Activated naive CD8-positive, alpha-beta T cell treated with anti-CD3 and anti-CD28 coated beads, Interleukin-2, amount 10 ng/mL, durations not matched to agents 7 days and 5 days (primary cell): ENCODE measurements at regions of chr15 and their contacts with region 1.

Region 1: DNA sequence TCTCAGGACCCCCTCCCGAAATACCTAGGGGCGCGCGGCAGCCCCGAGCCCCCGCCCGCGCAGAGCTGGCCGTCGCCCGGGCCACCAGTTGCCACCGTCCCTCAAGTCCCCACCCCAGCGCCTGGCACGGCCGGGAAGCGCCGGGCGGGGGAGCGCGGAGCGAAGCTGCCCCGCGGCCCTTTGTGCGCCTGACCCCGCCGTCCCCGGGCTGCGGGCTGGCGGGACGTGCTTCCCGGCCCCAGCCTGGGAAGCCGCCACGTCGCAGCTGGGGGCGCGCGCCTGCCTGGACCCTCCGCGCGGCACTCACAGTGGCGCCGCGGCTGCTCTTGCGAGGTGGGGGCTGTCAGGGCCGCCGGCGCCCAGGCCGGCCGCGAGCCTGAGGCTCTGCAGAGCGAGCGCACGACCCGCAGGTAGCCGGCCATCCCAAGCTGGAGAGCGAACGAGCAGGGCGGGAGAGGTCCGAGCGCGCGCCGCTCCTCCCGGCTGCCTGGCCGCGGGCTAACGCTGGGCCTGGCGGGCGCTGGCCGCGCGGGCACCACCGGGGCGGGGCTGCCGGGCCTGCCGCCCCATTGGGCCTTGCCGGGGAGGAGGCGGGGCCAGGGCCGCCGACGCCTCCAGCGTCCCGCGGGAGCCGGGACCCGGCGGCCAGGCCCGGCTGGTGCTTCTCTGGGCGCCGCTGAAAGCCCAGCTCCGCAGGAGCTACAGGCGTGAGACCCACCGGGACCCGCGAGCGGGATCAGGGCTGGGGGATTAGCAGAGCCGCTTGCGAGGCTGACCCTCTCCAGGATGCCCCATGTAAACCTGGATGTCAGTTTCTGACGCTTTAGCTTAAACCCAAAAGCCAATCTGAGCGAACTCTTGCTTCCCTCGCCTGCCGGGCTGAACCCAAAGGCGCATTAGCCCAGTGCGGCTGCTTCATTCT is at the start of gene IDH2:
- DNase-seq: peak; percentile 90
- ATAC-seq: peak; percentile 76
- H3K4me3 Mint-ChIP-seq: peak within 1 kb of the TSS; percentile 87
- H3K27ac Mint-ChIP-seq: peak within 1 kb of the TSS; percentile 96
- H3K4me1 Mint-ChIP-seq: peaks cover 43% of the 10 kb centered on the region
- H3K27me3 Mint-ChIP-seq: peaks cover 5% of the 10 kb centered on the region
- total RNA-seq, gene IDH2: 233 to 260 TPM

Region 2: GRCh38 chr15:89893696-89894455 is 208.4 kb before region 1 on chr15 and contains the start of gene AP3S2:
- POLR2A ChIA-PET with region 1: interaction called, 10 read pairs
- DNase-seq: peak; percentile 88
- ATAC-seq: peak; percentile 95
- H3K4me3 Mint-ChIP-seq: peak within 1 kb of the TSS; percentile 94
- H3K27ac Mint-ChIP-seq: peak within 1 kb of the TSS; percentile 93
- H3K4me1 Mint-ChIP-seq: peaks cover 30% of the 10 kb centered on the region
- H3K27me3 Mint-ChIP-seq: peaks cover 17% of the 10 kb centered on the region
- total RNA-seq, gene AP3S2: 28.2 to 30.8 TPM

Region 3: GRCh38 chr15:90042766-90043529 is 59.3 kb before region 1 on chr15:
- POLR2A ChIA-PET with region 1: no interaction called
- DNase-seq: no peak
- ATAC-seq: no peak
- H3K4me3 Mint-ChIP-seq: no peak overlapping the region
- H3K27ac Mint-ChIP-seq: no peak overlapping the region
- H3K4me1 Mint-ChIP-seq: peaks cover 17% of the 10 kb centered on the region
- H3K27me3 Mint-ChIP-seq: no peaks in the 10 kb centered on the region

Region 4: GRCh38 chr15:90075420-90076289 is 26.6 kb before region 1 on chr15:
- POLR2A ChIA-PET with region 1: no interaction called
- DNase-seq: no peak
- ATAC-seq: no peak
- H3K4me3 Mint-ChIP-seq: no peak overlapping the region
- H3K27ac Mint-ChIP-seq: no peak overlapping the region
- H3K4me1 Mint-ChIP-seq: peaks cover 3% of the 10 kb centered on the region
- H3K27me3 Mint-ChIP-seq: no peaks in the 10 kb centered on the region

Region 5: DNA sequence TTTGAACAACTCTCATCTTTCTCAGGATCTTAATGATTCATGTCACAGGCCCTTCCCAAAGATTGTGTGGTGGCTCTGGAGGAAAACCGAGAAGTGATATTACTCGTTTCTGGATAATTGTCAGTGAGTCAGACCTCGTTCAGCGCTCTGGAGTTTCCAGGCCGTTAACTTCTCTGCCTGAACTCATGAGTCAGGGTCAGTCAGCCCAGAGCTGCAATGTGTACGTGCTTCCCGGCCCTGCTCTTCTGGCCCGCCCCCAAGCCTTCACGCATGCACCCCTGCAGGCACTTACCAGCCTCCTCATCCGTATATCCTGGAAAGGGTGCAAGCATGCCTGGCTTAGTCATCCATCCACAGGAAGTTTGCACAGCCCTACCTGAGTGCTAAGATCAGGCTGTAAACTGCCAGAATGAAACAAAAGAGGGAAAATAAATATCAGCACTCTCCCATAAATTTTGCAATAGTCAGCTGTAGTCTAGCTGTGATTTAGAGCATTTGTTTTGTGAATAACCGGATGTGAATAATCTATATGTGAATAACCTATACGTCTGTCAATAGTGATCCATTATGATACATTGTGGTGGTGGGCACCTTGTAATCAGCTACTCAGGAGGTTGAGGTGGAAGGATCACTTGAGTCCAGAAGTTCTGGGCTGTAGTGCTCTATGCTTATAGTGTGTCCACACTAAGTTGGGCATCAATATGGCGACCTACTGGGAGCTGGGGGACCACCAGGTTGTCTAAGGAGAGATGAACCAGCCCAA is 63.6 kb after region 1 on chr15:
- POLR2A ChIA-PET with region 1: no interaction called
- DNase-seq: no peak
- ATAC-seq: no peak
- H3K4me3 Mint-ChIP-seq: no peak overlapping the region
- H3K27ac Mint-ChIP-seq: no peak overlapping the region
- H3K4me1 Mint-ChIP-seq: peaks cover 3% of the 10 kb centered on the region
- H3K27me3 Mint-ChIP-seq: peaks cover 14% of the 10 kb centered on the region

Region 6: DNA sequence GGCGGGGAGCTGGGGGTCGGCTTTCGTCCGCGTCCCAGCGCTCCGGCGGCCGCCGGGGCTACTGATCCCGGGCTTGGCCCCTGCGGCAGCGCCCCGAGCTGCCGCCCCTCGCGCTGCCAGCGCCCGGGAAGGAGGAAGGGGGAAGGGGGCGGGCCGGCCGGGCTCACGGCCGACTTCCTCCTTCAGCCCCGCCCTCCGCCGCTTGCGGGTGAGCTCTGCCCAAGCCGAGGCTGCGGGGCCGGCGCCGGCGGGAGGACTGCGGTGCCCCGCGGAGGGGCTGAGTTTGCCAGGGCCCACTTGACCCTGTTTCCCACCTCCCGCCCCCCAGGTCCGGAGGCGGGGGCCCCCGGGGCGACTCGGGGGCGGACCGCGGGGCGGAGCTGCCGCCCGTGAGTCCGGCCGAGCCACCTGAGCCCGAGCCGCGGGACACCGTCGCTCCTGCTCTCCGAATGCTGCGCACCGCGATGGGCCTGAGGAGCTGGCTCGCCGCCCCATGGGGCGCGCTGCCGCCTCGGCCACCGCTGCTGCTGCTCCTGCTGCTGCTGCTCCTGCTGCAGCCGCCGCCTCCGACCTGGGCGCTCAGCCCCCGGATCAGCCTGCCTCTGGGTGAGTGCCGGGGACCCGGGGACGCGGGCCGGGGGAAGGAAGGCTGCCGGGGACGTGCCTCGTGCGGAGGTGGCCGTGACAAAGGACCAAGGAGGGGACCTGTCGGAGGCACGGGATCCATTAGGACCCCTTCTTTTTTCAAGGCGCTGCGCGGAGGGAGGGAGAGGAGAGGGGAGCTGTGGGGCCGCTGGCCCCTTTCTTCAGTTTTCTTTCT is 99.1 kb after region 1 on chr15 and contains the start of gene SEMA4B:
- POLR2A ChIA-PET with region 1: interaction called, 10 read pairs
- DNase-seq: peak; percentile 87
- ATAC-seq: peak; percentile 92
- H3K4me3 Mint-ChIP-seq: peak within 1 kb of the TSS; percentile 83
- H3K27ac Mint-ChIP-seq: peak within 1 kb of the TSS; percentile 84
- H3K4me1 Mint-ChIP-seq: peaks cover 20% of the 10 kb centered on the region
- H3K27me3 Mint-ChIP-seq: peaks cover 9% of the 10 kb centered on the region
- total RNA-seq, gene SEMA4B: 14.1 to 15.4 TPM